Dorsolateral prefrontal cortex (tissue), 120 donors: ENCODE measurements at regions of chr7 and their contacts with region 1.

Region 1: GRCh38 chr7:101882595-101883564 is 65.5 kb downstream of the CUX1 start:
- DNase-seq: peak in 3 of 10 donors; percentile 16 to 47 (median 28)
- H3K4me3 ChIP-seq: peak overlapping the region in 31 of 59 donors; percentile 3 to 54 (median 25)
- H3K27ac ChIP-seq: peak overlapping the region in 57 of 59 donors; percentile 3 to 88 (median 67)
- H3K27me3 ChIP-seq: no peaks in the 10 kb centered on the region
- CTCF ChIP-seq: peak in 11 of 56 donors; percentile 8 to 41 (median 14)

Region 2: GRCh38 chr7:101933688-101934121 is 50.8 kb after region 1 on chr7:
- intact Hi-C with region 1: loop called in 1 of 2 experiments (anchors 5 kb)
- DNase-seq: no peak
- H3K4me3 ChIP-seq: no peak overlapping the region
- H3K27ac ChIP-seq: no peak overlapping the region
- H3K27me3 ChIP-seq: no peaks in the 10 kb centered on the region
- CTCF ChIP-seq: no peak

Region 3: DNA sequence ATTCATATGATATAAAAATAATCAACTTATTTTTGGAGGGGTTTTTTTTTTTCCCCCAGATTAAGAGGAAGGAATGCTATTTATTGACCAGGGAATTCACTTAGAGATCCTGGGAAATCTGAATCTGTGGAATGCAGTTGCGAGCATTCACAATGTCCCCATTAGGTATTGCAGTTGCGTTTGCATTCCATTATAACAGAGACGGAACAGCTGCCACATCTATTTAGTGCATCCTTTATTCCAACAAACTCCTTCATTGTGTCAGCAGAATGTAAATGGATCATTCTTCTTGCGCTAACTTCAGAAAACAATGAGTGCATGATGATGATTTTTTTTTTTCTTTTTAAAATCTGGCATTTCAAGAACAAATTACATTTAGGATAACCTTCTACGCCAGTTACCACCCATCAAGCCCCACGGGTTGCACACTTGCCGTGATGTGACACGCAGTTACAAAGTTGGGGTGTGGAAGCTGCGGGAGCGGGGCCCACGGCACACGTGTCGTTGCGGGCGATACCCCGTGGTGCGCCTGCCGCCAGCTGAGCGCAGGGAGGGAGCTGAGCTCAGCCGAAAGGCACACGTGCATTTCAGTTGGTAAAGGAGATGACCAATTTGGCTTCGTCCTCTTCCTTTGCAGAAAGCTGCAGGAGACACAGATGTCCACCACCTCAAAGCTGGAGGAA is 228.3 kb after region 1 on chr7:
- intact Hi-C with region 1: loop called in 1 of 2 experiments (anchors 10 kb)
- DNase-seq: peak in 8 of 10 donors; percentile 16 to 67 (median 50)
- H3K4me3 ChIP-seq: peak overlapping the region in 55 of 59 donors; percentile 4 to 62 (median 37)
- H3K27ac ChIP-seq: peak overlapping the region in 56 of 59 donors; percentile 1 to 85 (median 70)
- H3K27me3 ChIP-seq: no peaks in the 10 kb centered on the region
- CTCF ChIP-seq: peak in 2 of 56 donors; percentile 8